Posterior cingulate gyrus (tissue), 11 donors: ENCODE measurements at regions of chr17 and their contacts with region 1.

Region 1: GRCh38 chr17:2711601-2712299 is at the start of gene CLUH:
- DNase-seq: peak; percentile 89 to 99 (median 94)

Region 2: DNA sequence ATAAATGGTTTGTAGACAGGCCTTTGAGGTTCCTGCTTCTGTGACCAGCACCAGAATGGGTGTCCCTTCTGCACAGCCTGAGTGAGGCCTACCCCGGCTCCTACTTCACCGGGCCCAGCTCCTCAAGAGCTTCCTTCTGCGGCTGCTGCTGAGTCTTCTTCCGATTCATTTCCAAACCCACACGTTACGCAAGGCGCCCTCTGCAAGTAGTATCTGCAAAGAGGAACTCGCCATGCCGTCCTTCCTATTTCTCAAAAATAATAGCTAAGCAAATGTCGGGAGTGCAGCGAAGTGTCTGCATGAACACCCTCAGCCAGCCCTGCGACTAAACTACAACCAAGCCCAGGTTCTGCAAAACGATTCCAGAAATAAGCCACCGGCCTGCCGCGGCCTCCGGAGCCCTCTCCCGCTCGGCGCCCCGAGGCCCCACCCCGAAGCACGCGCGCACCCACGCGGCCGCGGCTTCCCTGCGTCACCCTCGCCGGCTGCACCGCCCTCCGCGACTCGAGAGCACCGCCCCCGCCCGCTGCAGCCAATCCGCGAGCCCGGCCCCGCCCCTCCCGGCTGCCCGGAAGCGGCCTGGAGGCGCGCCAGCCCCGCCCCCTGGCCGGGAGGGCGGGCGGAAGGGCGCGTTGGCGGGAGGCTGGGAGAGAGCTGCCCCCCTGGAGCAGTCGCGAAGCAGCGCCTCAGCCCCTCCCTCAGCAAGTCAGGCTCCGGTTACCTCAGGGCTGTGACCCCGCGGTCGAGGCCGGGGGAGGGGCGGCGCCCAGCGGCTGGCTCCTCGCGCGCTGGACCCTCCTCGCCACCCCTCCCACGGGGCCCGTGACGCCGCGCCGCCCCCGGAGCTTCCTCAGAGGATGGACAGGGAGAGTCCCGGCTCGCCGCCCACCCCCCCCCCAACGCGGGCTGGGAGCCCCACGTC is 319.2 kb before region 1 on chr17:
- intact Hi-C with region 1: loop called (anchors 5 kb)
- DNase-seq: peak; percentile 90 to 99 (median 96)